Endothelial cell of umbilical vein (primary cell): ENCODE measurements at regions of chr9 and their contacts with region 1.

Region 1: GRCh38 chr9:94213511-94214124 is 45.5 kb upstream of the ZNF169 start:
- DNase-seq: peak; percentile 72
- H3K4me3 ChIP-seq: no peak overlapping the region
- H3K27ac ChIP-seq: no peak overlapping the region
- H3K4me1 ChIP-seq: peaks cover 2% of the 10 kb centered on the region
- H3K27me3 ChIP-seq: no peaks in the 10 kb centered on the region
- CTCF ChIP-seq: peak; percentile 69
- POLR2A ChIP-seq: no peak

Region 2: GRCh38 chr9:93962561-93963440 is 250.8 kb before region 1 on chr9:
- CTCF ChIA-PET with region 1: interaction called, 7 read pairs
- POLR2A ChIA-PET with region 1: no interaction called
- dilution Hi-C with region 1: no loop called
- intact Hi-C with region 1: loop called (anchors 1 kb)
- DNase-seq: peak; percentile 87
- H3K4me3 ChIP-seq: no peak overlapping the region
- H3K27ac ChIP-seq: no peak overlapping the region
- H3K4me1 ChIP-seq: no peaks in the 10 kb centered on the region
- H3K27me3 ChIP-seq: peaks cover 43 to 45% of the 10 kb centered on the region in 2 experiments
- CTCF ChIP-seq: peak; percentile 70 to 71
- POLR2A ChIP-seq: no peak

Region 3: GRCh38 chr9:94030318-94031179 is 183.1 kb before region 1 on chr9:
- CTCF ChIA-PET with region 1: interaction called, 13 read pairs
- POLR2A ChIA-PET with region 1: no interaction called
- dilution Hi-C with region 1: no loop called
- intact Hi-C with region 1: no loop called
- DNase-seq: peak; percentile 88
- H3K4me3 ChIP-seq: peak overlapping the region; percentile 70 to 87 (median 86)
- H3K27ac ChIP-seq: peak overlapping the region; percentile 54
- H3K4me1 ChIP-seq: peaks cover 14% of the 10 kb centered on the region
- H3K27me3 ChIP-seq: no peaks in the 10 kb centered on the region
- CTCF ChIP-seq: no peak
- POLR2A ChIP-seq: peak; percentile 58

Region 4: GRCh38 chr9:94076557-94076956 is 137.1 kb before region 1 on chr9:
- CTCF ChIA-PET with region 1: interaction called, 18 read pairs
- POLR2A ChIA-PET with region 1: no interaction called
- dilution Hi-C with region 1: no loop called
- intact Hi-C with region 1: no loop called
- DNase-seq: no peak
- H3K4me3 ChIP-seq: no peak overlapping the region
- H3K27ac ChIP-seq: no peak overlapping the region
- H3K4me1 ChIP-seq: peaks cover 11% of the 10 kb centered on the region
- H3K27me3 ChIP-seq: no peaks in the 10 kb centered on the region
- CTCF ChIP-seq: no peak
- POLR2A ChIP-seq: no peak

Region 5: GRCh38 chr9:94157050-94157764 is 56.4 kb before region 1 on chr9:
- CTCF ChIA-PET with region 1: interaction called, 20 read pairs
- POLR2A ChIA-PET with region 1: no interaction called
- dilution Hi-C with region 1: no loop called
- intact Hi-C with region 1: no loop called
- DNase-seq: peak; percentile 83
- H3K4me3 ChIP-seq: no peak overlapping the region
- H3K27ac ChIP-seq: peak overlapping the region; percentile 27
- H3K4me1 ChIP-seq: peaks cover 10% of the 10 kb centered on the region
- H3K27me3 ChIP-seq: no peaks in the 10 kb centered on the region
- CTCF ChIP-seq: no peak
- POLR2A ChIP-seq: peak; percentile 45

Region 6: DNA sequence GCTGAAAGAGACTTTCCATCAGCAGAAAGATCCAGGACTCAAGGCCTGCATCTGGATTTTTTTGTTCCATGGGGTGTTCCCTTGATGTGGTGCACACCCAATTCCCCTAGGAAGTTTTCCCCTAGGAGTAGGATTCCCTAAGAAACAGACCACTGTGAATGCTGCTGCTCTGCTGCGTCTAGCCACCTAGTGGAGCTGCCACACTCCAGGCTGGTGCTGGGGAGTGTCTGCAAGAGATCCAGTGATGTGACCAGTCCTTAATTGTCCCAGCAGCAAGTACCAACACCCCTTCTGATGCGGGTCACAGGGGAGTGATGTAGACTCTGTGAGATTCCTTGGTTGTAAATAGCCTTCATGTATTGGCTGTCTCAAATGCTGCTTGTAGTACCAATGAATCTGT is 16.0 kb before region 1 on chr9:
- CTCF ChIA-PET with region 1: interaction called, 14 read pairs
- POLR2A ChIA-PET with region 1: no interaction called
- dilution Hi-C with region 1: no loop called
- intact Hi-C with region 1: no loop called
- DNase-seq: no peak
- H3K4me3 ChIP-seq: no peak overlapping the region
- H3K27ac ChIP-seq: no peak overlapping the region
- H3K4me1 ChIP-seq: no peaks in the 10 kb centered on the region
- H3K27me3 ChIP-seq: no peaks in the 10 kb centered on the region
- CTCF ChIP-seq: no peak
- POLR2A ChIP-seq: no peak

Region 7: DNA sequence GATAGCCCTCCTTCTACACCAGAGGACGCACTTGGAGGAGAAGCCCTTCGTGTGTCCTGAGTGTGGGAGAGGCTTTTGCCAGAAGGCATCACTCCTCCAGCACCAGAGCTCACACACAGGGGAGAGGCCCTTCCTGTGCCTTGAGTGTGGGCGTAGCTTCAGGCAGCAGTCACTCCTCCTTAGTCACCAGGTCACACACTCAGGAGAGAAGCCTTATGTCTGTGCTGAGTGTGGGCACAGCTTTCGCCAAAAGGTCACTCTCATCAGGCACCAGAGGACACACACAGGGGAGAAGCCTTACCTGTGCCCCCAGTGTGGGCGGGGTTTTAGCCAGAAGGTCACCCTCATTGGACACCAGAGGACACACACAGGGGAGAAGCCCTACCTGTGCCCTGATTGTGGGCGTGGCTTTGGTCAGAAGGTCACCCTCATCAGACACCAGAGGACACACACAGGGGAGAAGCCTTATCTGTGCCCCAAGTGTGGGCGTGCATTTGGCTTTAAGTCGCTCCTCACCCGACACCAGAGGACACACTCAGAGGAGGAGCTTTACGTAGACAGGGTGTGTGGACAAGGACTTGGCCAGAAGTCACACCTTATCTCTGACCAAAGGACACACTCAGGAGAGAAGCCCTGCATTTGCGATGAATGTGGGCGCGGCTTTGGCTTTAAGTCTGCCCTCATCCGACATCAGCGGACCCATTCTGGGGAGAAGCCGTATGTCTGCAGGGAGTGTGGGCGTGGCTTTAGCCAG is 87.1 kb after region 1 on chr9:
- CTCF ChIA-PET with region 1: no interaction called
- POLR2A ChIA-PET with region 1: no interaction called
- dilution Hi-C with region 1: no loop called
- intact Hi-C with region 1: no loop called
- DNase-seq: no peak
- H3K4me3 ChIP-seq: no peak overlapping the region
- H3K27ac ChIP-seq: no peak overlapping the region
- H3K4me1 ChIP-seq: no peaks in the 10 kb centered on the region
- H3K27me3 ChIP-seq: no peaks in the 10 kb centered on the region
- CTCF ChIP-seq: no peak
- POLR2A ChIP-seq: no peak

Region 8: GRCh38 chr9:94576131-94576530 is 362.5 kb after region 1 on chr9:
- CTCF ChIA-PET with region 1: no interaction called
- POLR2A ChIA-PET with region 1: no interaction called
- dilution Hi-C with region 1: no loop called
- intact Hi-C with region 1: no loop called
- DNase-seq: no peak
- H3K4me3 ChIP-seq: no peak overlapping the region
- H3K27ac ChIP-seq: no peak overlapping the region
- H3K4me1 ChIP-seq: no peaks in the 10 kb centered on the region
- H3K27me3 ChIP-seq: no peaks in the 10 kb centered on the region
- CTCF ChIP-seq: no peak
- POLR2A ChIP-seq: no peak